Right lobe of liver (tissue), 6 donors: ENCODE measurements at regions of chr17 and their contacts with region 1.

Region 1: GRCh38 chr17:78970834-78971773 is 8.6 kb downstream of the LGALS3BP start:
- DNase-seq: peak; percentile 76 to 79 (median 78)
- ATAC-seq: peak; percentile 56 to 73 (median 70)
- H3K4me3 ChIP-seq: no peak overlapping the region
- H3K27ac ChIP-seq: no peak overlapping the region
- H3K4me1 ChIP-seq: peaks cover 0 to 16% (median 5%) of the 10 kb centered on the region in 4 donors
- H3K27me3 ChIP-seq: no peaks in the 10 kb centered on the region
- CTCF ChIP-seq: peak; percentile 83 to 88 (median 85)
- POLR2A ChIP-seq: no peak

Region 2: GRCh38 chr17:78865682-78866390 is 105.3 kb before region 1 on chr17:
- intact Hi-C with region 1: loop called (anchors 5 kb)
- DNase-seq: peak; percentile 81 to 88 (median 87)
- ATAC-seq: peak; percentile 94 to 99 (median 98)
- H3K4me3 ChIP-seq: no peak overlapping the region
- H3K27ac ChIP-seq: no peak overlapping the region
- H3K4me1 ChIP-seq: peaks cover 0 to 4% (median 0%) of the 10 kb centered on the region in 4 donors
- H3K27me3 ChIP-seq: no peaks in the 10 kb centered on the region
- CTCF ChIP-seq: peak; percentile 84 to 97 (median 92)
- POLR2A ChIP-seq: no peak

Region 3: GRCh38 chr17:79023886-79024771 is 53.0 kb after region 1 on chr17 and contains the start of gene C1QTNF1:
- intact Hi-C with region 1: no loop called
- DNase-seq: peak in 2 of 3 donors; percentile 40 to 53
- ATAC-seq: peak; percentile 4 to 31 (median 11)
- H3K4me3 ChIP-seq: peak within 1 kb of the TSS; percentile 42 to 51 (median 47)
- H3K27ac ChIP-seq: peak within 1 kb of the TSS; percentile 62 to 82 (median 76)
- H3K4me1 ChIP-seq: peaks cover 0 to 11% (median 1%) of the 10 kb centered on the region in 4 donors
- H3K27me3 ChIP-seq: no peaks in the 10 kb centered on the region
- CTCF ChIP-seq: peak in 3 of 4 donors; percentile 5 to 51 (median 11)
- POLR2A ChIP-seq: peak; percentile 32
- total RNA-seq, gene C1QTNF1: 9.8 to 40.2 (median 26.2) TPM